ENCODE measurements at regions of chr17 and their contacts with region 1.

Region 1: GRCh38 chr17:47802341-47803022 is 19.1 kb downstream of the OSBPL7 start:
- DNase-seq: no peak
- ATAC-seq: peak in 7 of 8 donors; percentile 32 to 63 (median 44)
- H3K4me3 ChIP-seq: no peak overlapping the region
- H3K27ac ChIP-seq: no peak overlapping the region
- H3K4me1 ChIP-seq: peaks cover 0 to 14% (median 0%) of the 10 kb centered on the region in 9 donors
- H3K27me3 ChIP-seq: peaks cover 0 to 3% (median 0%) of the 10 kb centered on the region in 7 donors
- CTCF ChIP-seq: peak in 8 of 9 donors; percentile 17 to 66 (median 58)

Region 2: DNA sequence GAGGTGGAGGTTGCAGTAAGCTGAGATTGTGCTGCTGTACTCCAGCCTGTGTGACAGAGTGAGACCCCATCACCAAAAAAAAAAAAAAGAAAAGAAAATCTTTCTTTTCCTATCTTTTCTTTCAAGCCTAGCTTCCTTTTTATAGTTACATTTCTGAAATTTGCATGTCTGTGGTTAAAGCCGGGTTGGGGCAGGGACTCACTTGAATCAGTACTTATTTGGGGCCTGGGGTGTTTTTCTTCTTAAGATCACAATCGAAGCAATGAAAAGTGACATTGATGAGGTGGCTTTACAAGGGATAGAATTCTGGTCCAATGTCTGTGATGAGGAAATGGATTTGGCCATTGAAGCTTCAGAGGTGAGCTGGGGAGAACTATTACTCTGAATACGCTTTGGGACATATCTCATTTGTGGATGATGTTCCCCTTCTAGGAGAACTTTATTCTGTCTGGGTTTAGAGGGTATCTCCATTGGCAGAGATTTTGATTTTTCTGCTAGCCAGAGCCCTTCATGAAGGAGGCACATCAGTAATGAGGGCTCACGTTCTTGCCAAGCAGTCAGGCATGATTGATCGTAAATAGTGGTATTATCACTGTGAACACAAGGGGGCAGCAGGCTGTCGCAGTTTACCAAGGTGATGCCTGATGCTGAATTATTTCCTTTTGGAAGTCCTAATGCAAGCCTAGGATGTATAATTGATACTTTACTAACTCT is 138.4 kb before region 1 on chr17:
- intact Hi-C with region 1: loop called in 4 of 10 experiments (anchors 5 to 10 kb)
- DNase-seq: peak in 1 of 2 donors; percentile 47
- ATAC-seq: peak; percentile 39 to 86 (median 74)
- H3K4me3 ChIP-seq: no peak overlapping the region
- H3K27ac ChIP-seq: peak overlapping the region in 1 of 10 donors; percentile 41
- H3K4me1 ChIP-seq: peaks cover 0 to 19% (median 0%) of the 10 kb centered on the region in 9 donors
- H3K27me3 ChIP-seq: no peaks in the 10 kb centered on the region
- CTCF ChIP-seq: peak; percentile 56 to 85 (median 79)

Region 3: GRCh38 chr17:47698749-47699535 is 103.5 kb before region 1 on chr17:
- intact Hi-C with region 1: loop called in 6 of 10 experiments (anchors 5 to 10 kb)
- DNase-seq: peak; percentile 61 to 71
- ATAC-seq: no peak
- H3K4me3 ChIP-seq: no peak overlapping the region
- H3K27ac ChIP-seq: peak overlapping the region in 1 of 10 donors; percentile 10
- H3K4me1 ChIP-seq: peaks cover 0 to 39% (median 22%) of the 10 kb centered on the region in 9 donors
- H3K27me3 ChIP-seq: no peaks in the 10 kb centered on the region
- CTCF ChIP-seq: peak in 8 of 9 donors; percentile 92 to 98 (median 94)